PC-3 (cell line): ENCODE measurements at regions of chr2 and their contacts with region 1.

Region 1: DNA sequence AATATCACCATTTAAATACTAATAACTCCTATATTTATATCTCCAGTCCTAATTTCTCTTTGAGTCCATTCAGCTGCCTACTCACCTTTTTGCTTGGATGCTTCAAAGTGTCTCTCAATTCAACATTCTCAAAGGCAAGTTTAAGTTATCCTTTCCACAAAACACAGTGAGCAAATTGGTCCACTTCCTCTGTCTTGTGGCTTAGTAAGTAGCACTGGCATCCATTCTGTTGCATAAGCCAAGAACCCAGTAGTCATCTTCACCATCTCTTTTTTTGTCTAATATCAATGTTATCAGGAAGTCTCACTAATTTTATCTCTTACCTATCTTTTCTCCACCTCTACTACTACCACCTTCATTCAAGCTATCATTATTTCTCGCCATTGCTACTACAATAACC is 27.4 kb upstream of the IL1RL1 start:
- DNase-seq: no peak
- ATAC-seq: no peak
- H3K4me3 ChIP-seq: no peak overlapping the region
- H3K27ac ChIP-seq: no peak overlapping the region
- H3K4me1 ChIP-seq: peaks cover 28% of the 10 kb centered on the region
- H3K27me3 ChIP-seq: no peaks in the 10 kb centered on the region
- CTCF ChIP-seq: no peak

Region 2: GRCh38 chr2:102313025-102313424 is 29.0 kb after region 1 on chr2:
- CTCF ChIA-PET with region 1: no interaction called
- POLR2A ChIA-PET with region 1: interaction called, 3 read pairs
- intact Hi-C with region 1: loop called (anchors 1 kb)
- DNase-seq: peak; percentile 89
- ATAC-seq: peak; percentile 97
- H3K4me3 ChIP-seq: 0 out of 2 replicates have a peak overlapping the region, but pooled peaks have one; percentile 3
- H3K27ac ChIP-seq: peak overlapping the region; percentile 82
- H3K4me1 ChIP-seq: peaks cover 16% of the 10 kb centered on the region
- H3K27me3 ChIP-seq: no peaks in the 10 kb centered on the region
- CTCF ChIP-seq: no peak

Region 3: DNA sequence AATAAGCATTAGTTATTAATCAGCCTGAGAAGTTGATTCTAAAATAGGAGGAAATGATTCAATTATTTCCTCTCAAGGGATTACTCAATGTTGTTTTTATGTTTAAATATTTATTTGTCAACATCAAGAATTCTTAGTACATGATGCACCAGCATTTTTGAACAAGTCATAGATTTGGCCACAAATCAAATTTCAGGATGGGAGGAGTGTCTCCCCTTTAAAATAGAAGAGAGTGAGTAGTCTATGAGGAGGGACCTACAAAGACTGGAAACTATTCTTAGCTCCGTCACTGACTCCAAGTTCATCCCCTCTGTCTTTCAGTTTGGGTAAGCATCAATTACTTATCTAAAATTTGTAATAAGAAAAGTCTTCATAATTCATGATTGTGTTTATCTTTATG is 53.0 kb after region 1 on chr2:
- CTCF ChIA-PET with region 1: interaction called, 3 read pairs
- POLR2A ChIA-PET with region 1: interaction called, 8 read pairs
- intact Hi-C with region 1: loop called (anchors 1 kb)
- DNase-seq: peak; percentile 95
- ATAC-seq: peak; percentile 78
- H3K4me3 ChIP-seq: peak overlapping the region; percentile 62
- H3K27ac ChIP-seq: peak overlapping the region; percentile 99
- H3K4me1 ChIP-seq: peaks cover 42% of the 10 kb centered on the region
- H3K27me3 ChIP-seq: no peaks in the 10 kb centered on the region
- CTCF ChIP-seq: no peak